CD4-positive, alpha-beta memory T cell (primary cell): ENCODE measurements at regions of chr6 and their contacts with region 1.

Region 1: GRCh38 chr6:160992061-160992979 is 751 bp downstream of the MAP3K4 start:
- DNase-seq: peak; percentile 32 to 77 (median 63)
- H3K4me3 ChIP-seq: peak overlapping the region; percentile 85 to 89
- H3K4me3 Mint-ChIP-seq: peak overlapping the region; percentile 91 to 100 (median 97)
- H3K27ac ChIP-seq: peak overlapping the region; percentile 73
- H3K27ac Mint-ChIP-seq: peak overlapping the region; percentile 96 to 99 (median 98)
- H3K4me1 ChIP-seq: peaks cover 45% of the 10 kb centered on the region
- H3K4me1 Mint-ChIP-seq: peaks cover 32 to 52% (median 42%) of the 10 kb centered on the region in 4 donors
- H3K27me3 ChIP-seq: no peaks in the 10 kb centered on the region
- H3K27me3 Mint-ChIP-seq: no peaks in the 10 kb centered on the region

Region 2: DNA sequence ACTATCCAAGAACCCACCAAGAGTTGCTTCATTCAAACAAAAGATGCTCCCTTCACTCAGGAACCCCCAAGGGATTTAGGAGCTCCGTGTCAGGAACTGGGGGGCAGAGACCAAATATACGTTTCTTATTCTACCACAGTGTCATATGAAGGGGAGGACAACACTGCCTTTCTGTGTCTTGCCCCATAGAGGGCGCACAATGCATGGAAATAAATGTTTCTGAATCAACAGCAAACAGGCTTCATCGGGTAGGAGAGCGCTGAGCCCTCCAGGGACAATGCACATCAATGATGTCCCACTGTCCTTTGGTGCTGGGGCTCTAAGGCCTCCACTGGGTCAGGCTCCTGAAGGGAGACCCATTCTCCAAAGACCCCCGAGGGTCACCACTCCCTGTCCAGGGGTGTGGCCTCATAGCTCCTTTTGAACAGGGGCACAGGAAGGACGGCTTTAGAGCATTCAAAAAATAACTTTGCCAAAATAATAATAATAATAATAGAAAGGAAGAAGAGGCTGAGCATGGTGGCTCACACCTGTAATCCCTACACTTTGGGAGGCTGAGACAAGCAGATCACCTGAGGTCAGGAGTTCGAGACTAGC is 259.2 kb before region 1 on chr6:
- CTCF ChIA-PET with region 1: no interaction called
- POLR2A ChIA-PET with region 1: no interaction called
- intact Hi-C with region 1: loop called (anchors 5 kb)
- DNase-seq: peak; percentile 11 to 44 (median 18)
- H3K4me3 ChIP-seq: no peak overlapping the region
- H3K4me3 Mint-ChIP-seq: no peak overlapping the region
- H3K27ac ChIP-seq: no peak overlapping the region
- H3K27ac Mint-ChIP-seq: no peak overlapping the region
- H3K4me1 ChIP-seq: no peaks in the 10 kb centered on the region
- H3K4me1 Mint-ChIP-seq: no peaks in the 10 kb centered on the region
- H3K27me3 ChIP-seq: no peaks in the 10 kb centered on the region
- H3K27me3 Mint-ChIP-seq: peaks cover 4% of the 10 kb centered on the region in 2 donors

Region 3: DNA sequence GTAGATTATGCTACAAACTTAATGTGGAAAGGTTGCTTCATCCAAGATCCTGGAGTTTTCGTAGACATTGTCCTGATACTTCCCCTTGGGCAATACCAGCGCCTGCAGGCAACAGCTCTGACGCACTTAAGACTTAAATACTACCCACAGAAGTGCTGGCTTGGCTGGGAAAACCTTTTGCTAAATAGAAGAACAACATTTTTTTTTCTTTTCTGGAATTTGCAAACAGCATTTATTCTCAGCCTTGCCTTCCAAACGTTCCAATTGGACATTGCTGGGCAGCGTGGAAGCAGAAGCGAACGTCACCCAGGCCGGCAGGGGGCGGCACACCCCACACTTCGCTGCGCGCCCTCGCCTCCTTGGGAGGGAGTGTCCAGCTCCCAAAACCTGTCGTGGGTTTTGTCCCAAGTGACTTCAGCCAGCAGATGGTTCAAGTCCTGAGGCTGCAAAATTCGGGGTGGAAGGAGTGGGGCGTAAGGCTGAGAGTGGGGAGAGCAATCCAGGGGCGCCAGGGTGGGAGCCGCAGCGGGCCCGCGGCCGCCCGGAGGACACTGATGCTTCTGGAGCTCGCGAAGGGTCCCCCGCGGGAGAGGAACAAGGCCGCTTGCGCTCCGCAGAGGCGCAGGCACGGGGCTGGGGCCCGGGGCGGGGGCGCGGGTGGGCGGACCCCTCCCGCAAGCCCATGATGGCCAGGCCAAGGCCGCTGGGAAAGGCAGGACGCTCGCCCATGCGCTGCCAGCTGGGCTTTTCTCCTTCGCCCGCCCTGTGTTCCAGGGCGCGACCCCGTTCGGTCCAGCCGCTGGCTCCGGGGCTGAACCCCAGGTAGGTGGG is 61.6 kb before region 1 on chr6:
- CTCF ChIA-PET with region 1: interaction called, 24 read pairs
- POLR2A ChIA-PET with region 1: interaction called, 7 read pairs
- intact Hi-C with region 1: loop called (anchors 2 kb)
- DNase-seq: peak; percentile 46 to 59 (median 49)
- H3K4me3 ChIP-seq: peak overlapping the region in 1 of 2 donors; percentile 44
- H3K4me3 Mint-ChIP-seq: peak overlapping the region; percentile 40 to 75 (median 62)
- H3K27ac ChIP-seq: no peak overlapping the region
- H3K27ac Mint-ChIP-seq: no peak overlapping the region
- H3K4me1 ChIP-seq: no peaks in the 10 kb centered on the region
- H3K4me1 Mint-ChIP-seq: peaks cover 2 to 11% (median 8%) of the 10 kb centered on the region in 4 donors
- H3K27me3 ChIP-seq: no peaks in the 10 kb centered on the region
- H3K27me3 Mint-ChIP-seq: peaks cover 16 to 22% of the 10 kb centered on the region in 2 donors

Region 4: GRCh38 chr6:161273752-161274487 is 281.6 kb after region 1 on chr6 and contains the start of gene AGPAT4:
- CTCF ChIA-PET with region 1: no interaction called
- POLR2A ChIA-PET with region 1: interaction called, 15 read pairs
- intact Hi-C with region 1: loop called (anchors 1 kb)
- DNase-seq: peak; percentile 82 to 90 (median 87)
- H3K4me3 ChIP-seq: peak within 1 kb of the TSS; percentile 46 to 64
- H3K4me3 Mint-ChIP-seq: peak within 1 kb of the TSS; percentile 91 to 97 (median 94)
- H3K27ac ChIP-seq: peak within 1 kb of the TSS; percentile 63
- H3K27ac Mint-ChIP-seq: peak within 1 kb of the TSS; percentile 95 to 99 (median 98)
- H3K4me1 ChIP-seq: peaks cover 24% of the 10 kb centered on the region
- H3K4me1 Mint-ChIP-seq: peaks cover 16 to 33% (median 27%) of the 10 kb centered on the region in 4 donors
- H3K27me3 ChIP-seq: no peaks in the 10 kb centered on the region
- H3K27me3 Mint-ChIP-seq: peaks cover 0 to 3% of the 10 kb centered on the region in 2 donors
- total RNA-seq, gene AGPAT4: 3.6 to 4.3 TPM

Region 5: DNA sequence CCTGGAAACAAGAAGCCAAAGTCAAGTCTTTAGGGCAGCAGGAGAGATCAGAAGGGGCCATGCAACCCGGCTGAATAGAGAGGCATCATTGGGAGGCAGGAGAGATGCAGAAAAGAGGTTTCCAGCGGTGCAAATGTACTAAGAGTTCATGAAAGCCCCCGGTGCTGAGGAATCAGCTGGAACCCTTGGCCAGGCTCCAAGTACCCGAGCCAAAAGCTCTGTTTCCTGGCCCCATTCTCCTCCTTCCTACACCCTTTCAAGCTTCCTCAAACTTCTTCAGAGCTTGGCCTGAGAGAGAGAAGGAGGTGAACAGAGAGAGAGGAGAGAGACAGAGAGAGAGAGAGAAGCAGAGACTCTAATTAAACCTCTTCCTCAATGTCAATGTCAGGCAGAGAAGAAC is 1301.7 kb after region 1 on chr6:
- CTCF ChIA-PET with region 1: no interaction called
- POLR2A ChIA-PET with region 1: no interaction called
- intact Hi-C with region 1: no loop called
- DNase-seq: no peak
- H3K4me3 ChIP-seq: no peak overlapping the region
- H3K4me3 Mint-ChIP-seq: no peak overlapping the region
- H3K27ac ChIP-seq: no peak overlapping the region
- H3K27ac Mint-ChIP-seq: no peak overlapping the region
- H3K4me1 ChIP-seq: no peaks in the 10 kb centered on the region
- H3K4me1 Mint-ChIP-seq: no peaks in the 10 kb centered on the region
- H3K27me3 ChIP-seq: no peaks in the 10 kb centered on the region
- H3K27me3 Mint-ChIP-seq: no peaks in the 10 kb centered on the region